Activated CD8-positive, alpha-beta T cell treated with anti-CD3 and anti-CD28 coated beads for 36 hours (primary cell): ENCODE measurements at regions of chr3 and their contacts with region 1.

Region 1: GRCh38 chr3:160449636-160450598 is at the start of gene TRIM59:
- DNase-seq: peak; percentile 99
- ATAC-seq: peak; percentile 96
- H3K4me3 Mint-ChIP-seq: peak within 1 kb of the TSS; percentile 97
- H3K27ac Mint-ChIP-seq: peak within 1 kb of the TSS; percentile 96
- H3K4me1 Mint-ChIP-seq: peaks cover 19% of the 10 kb centered on the region
- H3K27me3 Mint-ChIP-seq: no peaks in the 10 kb centered on the region
- CTCF ChIP-seq: no peak
- total RNA-seq, gene TRIM59: 27.0 to 27.8 TPM

Region 2: DNA sequence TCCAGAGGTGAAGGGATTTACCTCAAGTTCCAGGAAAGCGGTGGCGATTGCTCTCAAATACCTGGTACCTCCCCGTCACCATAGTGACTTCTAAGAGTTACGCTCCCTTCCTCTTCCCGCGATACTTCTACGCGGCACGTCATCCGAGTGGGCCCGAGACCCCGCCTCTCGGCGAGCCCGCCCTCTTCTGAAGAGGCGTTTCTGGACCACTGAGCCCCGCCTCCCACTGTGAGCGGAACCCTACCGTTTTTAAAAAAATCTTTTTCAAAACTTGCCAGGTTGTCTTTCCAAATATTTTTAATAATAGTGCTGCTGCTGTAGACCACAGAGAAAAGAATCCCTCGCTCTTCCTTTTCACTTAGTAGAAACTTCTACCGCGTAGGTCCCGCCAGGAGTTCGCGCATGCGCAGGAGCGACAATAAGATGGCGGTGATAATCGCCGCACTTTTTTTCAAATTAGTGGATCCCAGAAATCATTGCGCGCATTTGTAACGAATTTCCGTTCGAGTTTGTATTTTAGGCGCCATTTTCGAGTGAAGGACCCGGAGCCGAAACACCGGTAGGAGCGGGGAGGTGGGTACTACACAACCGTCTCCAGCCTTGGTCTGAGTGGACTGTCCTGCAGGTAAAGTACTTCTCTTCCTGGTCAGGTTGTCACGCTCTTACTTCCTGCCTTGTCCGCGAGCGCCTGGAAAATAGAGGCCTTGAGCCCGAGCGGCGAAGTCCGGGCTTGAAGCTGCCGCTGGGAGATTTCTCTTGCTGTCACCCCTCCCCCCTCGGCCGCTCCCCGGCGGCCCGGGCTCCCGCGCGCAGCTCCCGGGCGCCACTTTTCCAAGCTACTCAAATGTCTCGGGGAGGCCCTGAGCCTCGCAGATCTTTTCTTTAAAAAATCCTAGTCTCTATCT is 50.5 kb before region 1 on chr3 and contains the starts of genes IFT80 and SMC4:
- CTCF ChIA-PET with region 1: no interaction called
- POLR2A ChIA-PET with region 1: interaction called, 28 read pairs
- intact Hi-C with region 1: no loop called
- DNase-seq: peak; percentile 97
- ATAC-seq: peak; percentile 97
- H3K4me3 Mint-ChIP-seq: peak within 1 kb of the TSS; percentile 95
- H3K27ac Mint-ChIP-seq: peak within 1 kb of the TSS; percentile 99
- H3K4me1 Mint-ChIP-seq: peaks cover 22% of the 10 kb centered on the region
- H3K27me3 Mint-ChIP-seq: peaks cover 6% of the 10 kb centered on the region
- CTCF ChIP-seq: no peak
- total RNA-seq, gene IFT80: 9.2 to 10.4 TPM
- total RNA-seq, gene SMC4: 149 to 154 TPM

Region 3: GRCh38 chr3:160427832-160428424 is 22.0 kb before region 1 on chr3:
- CTCF ChIA-PET with region 1: no interaction called
- POLR2A ChIA-PET with region 1: interaction called, 13 read pairs
- intact Hi-C with region 1: no loop called
- DNase-seq: no peak
- ATAC-seq: no peak
- H3K4me3 Mint-ChIP-seq: no peak overlapping the region
- H3K27ac Mint-ChIP-seq: no peak overlapping the region
- H3K4me1 Mint-ChIP-seq: no peaks in the 10 kb centered on the region
- H3K27me3 Mint-ChIP-seq: no peaks in the 10 kb centered on the region
- CTCF ChIP-seq: no peak

Region 4: DNA sequence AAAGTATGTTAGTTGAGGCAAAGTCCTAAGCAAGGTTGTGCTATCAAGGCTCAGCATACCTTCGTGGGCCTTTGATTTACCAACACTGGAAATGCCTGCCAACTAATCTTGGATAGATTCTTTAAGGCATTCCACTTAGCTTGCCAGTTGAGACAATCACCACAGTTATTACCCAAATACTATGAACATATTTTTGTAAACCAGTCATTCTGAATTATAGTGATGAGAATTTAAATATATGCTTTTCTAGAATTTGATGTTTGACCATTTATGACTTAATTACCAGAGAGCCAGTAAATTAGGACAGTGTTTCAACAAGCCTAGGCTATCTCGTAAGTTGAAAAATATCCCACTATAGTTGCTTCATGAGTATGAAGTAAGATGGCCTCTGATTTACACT is 15.8 kb before region 1 on chr3:
- CTCF ChIA-PET with region 1: no interaction called
- POLR2A ChIA-PET with region 1: interaction called, 10 read pairs
- intact Hi-C with region 1: no loop called
- DNase-seq: no peak
- ATAC-seq: no peak
- H3K4me3 Mint-ChIP-seq: no peak overlapping the region
- H3K27ac Mint-ChIP-seq: no peak overlapping the region
- H3K4me1 Mint-ChIP-seq: peaks cover 22% of the 10 kb centered on the region
- H3K27me3 Mint-ChIP-seq: no peaks in the 10 kb centered on the region
- CTCF ChIP-seq: no peak

Region 5: GRCh38 chr3:160486459-160486869 is 36.5 kb after region 1 on chr3:
- CTCF ChIA-PET with region 1: interaction called, 3 read pairs
- POLR2A ChIA-PET with region 1: interaction called, 6 read pairs
- intact Hi-C with region 1: loop called (anchors 5 kb)
- DNase-seq: peak; percentile 26
- ATAC-seq: no peak
- H3K4me3 Mint-ChIP-seq: no peak overlapping the region
- H3K27ac Mint-ChIP-seq: no peak overlapping the region
- H3K4me1 Mint-ChIP-seq: peaks cover 3% of the 10 kb centered on the region
- H3K27me3 Mint-ChIP-seq: peaks cover 1% of the 10 kb centered on the region
- CTCF ChIP-seq: peak; percentile 66

Region 6: GRCh38 chr3:160754855-160755747 is 305.2 kb after region 1 on chr3:
- CTCF ChIA-PET with region 1: no interaction called
- POLR2A ChIA-PET with region 1: interaction called, 4 read pairs
- intact Hi-C with region 1: loop called (anchors 5 kb)
- DNase-seq: peak; percentile 90
- ATAC-seq: peak; percentile 90
- H3K4me3 Mint-ChIP-seq: peak overlapping the region; percentile 80
- H3K27ac Mint-ChIP-seq: peak overlapping the region; percentile 95
- H3K4me1 Mint-ChIP-seq: peaks cover 27% of the 10 kb centered on the region
- H3K27me3 Mint-ChIP-seq: peaks cover 23% of the 10 kb centered on the region
- CTCF ChIP-seq: no peak